Uterus (tissue), 4 donors: ENCODE measurements at regions of chr10 and their contacts with region 1.

Region 1: GRCh38 chr10:5442065-5442989 is 30.0 kb downstream of the NET1 start:
- DNase-seq: peak in 1 of 2 donors; percentile 51
- H3K4me3 ChIP-seq: no peak overlapping the region
- H3K27ac ChIP-seq: no peak overlapping the region
- H3K4me1 ChIP-seq: no peaks in the 10 kb centered on the region
- H3K27me3 ChIP-seq: no peaks in the 10 kb centered on the region
- CTCF ChIP-seq: peak; percentile 70 to 86 (median 81)
- POLR2A ChIP-seq: no peak

Region 2: DNA sequence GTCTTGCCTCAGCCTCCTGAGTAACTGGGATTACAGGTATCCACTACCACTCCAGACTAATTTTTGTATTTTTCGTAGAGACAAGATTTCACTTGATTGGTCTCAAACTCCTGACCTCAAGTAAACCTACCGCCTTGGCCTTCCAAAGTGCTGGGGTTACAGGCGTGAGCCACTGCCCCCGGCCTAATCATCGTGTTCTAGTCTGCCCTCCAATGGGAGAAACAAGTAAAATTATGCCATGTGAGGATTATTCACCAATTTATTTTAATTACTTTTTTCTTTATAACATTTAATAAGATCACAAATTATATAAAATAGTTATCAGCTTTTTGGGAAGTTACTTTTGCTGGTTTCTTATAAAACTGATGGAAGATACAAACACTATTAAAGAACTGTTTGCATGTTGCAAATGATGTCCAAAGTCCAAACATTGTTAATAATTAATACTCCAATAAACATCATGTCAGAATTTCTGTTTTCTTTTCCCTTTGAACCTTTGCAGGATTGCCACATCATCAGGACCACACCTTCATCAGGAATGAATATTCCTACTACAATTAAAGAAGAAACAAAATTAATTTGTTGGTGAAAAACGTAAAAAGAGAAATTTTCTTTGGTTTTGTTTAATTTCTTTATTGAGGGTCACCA is 246.5 kb before region 1 on chr10:
- intact Hi-C with region 1: no loop called
- DNase-seq: no peak
- H3K4me3 ChIP-seq: no peak overlapping the region
- H3K27ac ChIP-seq: no peak overlapping the region
- H3K4me1 ChIP-seq: no peaks in the 10 kb centered on the region
- H3K27me3 ChIP-seq: no peaks in the 10 kb centered on the region
- CTCF ChIP-seq: no peak
- POLR2A ChIP-seq: no peak

Region 3: DNA sequence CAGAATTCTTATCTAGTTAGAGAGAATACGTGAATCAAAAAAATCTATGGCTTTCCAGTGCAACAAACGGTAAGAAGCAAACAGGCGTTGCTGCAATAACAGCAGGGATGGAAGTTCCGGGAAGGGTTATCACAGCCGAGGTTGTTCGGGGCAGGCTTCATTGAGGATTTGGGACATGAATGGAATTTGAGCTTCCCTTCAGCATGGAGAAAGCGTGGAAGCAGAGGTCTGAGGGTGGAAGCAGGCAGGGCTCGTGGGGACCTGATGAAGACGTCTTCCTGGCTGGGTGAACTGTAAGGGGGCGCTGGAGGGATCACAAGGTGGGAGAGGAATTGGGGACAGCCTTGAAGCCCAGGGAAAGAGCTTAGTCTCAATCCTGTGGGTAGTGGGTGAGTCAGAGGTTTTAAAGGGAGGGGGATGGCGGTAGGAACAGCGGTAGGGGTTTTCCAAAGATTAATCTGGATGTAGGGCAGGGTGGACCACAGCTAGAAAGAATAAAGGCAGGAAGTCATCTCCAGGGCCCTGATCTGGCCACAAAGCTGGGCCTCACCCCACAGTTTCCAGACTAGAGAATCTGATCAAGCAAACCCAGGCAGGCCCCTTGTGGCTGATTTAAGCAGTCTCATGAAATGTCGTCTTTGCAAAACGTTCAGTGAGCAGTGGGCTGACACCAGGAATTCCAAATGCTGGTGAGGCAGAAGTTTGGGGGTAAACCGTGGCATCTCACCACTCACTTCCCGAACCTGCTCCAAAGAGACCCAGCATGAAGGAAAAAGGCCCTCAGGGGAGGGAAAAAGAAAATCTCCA is 147.6 kb after region 1 on chr10:
- intact Hi-C with region 1: no loop called
- DNase-seq: no peak
- H3K4me3 ChIP-seq: no peak overlapping the region
- H3K27ac ChIP-seq: peak overlapping the region; percentile 3 to 14
- H3K4me1 ChIP-seq: no peaks in the 10 kb centered on the region
- H3K27me3 ChIP-seq: no peaks in the 10 kb centered on the region
- CTCF ChIP-seq: no peak
- POLR2A ChIP-seq: no peak

Region 4: DNA sequence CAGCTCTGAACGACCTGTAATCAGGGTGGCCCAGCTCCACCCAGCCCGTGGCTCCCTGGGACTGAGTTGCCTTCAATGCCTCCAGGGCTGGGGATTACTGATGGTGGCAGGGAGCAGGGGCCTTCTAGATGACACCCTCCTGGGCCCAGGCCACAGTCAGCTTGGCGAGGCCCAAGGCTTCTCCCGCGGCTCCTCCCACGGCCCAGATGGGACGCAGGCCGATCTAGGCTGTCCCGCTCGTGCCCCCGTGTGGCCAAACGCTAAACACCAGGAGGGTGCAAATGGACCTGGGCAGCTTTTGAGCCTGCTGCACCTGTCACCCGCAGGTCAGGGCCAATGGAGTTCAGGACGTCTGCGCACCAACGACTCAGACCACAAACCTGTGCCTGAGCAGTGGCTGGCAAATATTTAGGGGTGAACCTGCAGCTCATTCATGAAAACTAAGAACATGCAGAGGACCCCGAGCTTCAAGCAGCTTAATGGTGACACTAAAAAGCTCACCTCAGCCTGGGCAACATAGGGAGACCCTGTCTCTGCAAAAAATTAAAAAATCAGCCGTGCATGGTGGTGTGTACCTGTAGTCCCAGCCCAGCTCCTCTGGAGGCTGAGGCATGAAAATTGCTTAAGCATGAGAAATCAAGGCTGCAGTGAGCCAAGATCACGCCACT is 180.9 kb after region 1 on chr10:
- intact Hi-C with region 1: loop called (anchors 5 kb)
- DNase-seq: peak; percentile 85 to 87
- H3K4me3 ChIP-seq: no peak overlapping the region
- H3K27ac ChIP-seq: peak overlapping the region; percentile 60 to 71
- H3K4me1 ChIP-seq: peaks cover 0 to 9% of the 10 kb centered on the region in 2 donors
- H3K27me3 ChIP-seq: no peaks in the 10 kb centered on the region
- CTCF ChIP-seq: peak; percentile 90 to 94 (median 91)
- POLR2A ChIP-seq: no peak

Region 5: DNA sequence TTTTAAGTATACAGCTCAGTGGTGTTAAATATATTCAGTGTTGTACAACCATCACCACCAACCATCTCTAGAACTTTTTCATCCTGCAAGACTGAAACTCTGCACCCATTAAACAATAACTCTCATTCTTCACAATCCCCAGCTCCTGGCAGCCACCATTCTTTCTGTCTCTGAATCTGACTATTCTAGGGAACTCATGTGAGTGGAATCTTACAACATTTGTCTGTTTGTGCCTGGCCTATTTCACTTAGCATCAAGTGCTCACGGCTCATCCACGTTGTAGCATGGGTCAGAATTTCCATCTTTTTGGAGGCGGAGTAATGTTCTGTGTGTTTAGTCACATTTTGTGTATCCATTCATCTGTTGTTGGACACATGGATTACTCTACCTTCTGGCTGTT is 719.6 kb after region 1 on chr10:
- intact Hi-C with region 1: no loop called
- DNase-seq: no peak
- H3K4me3 ChIP-seq: no peak overlapping the region
- H3K27ac ChIP-seq: peak overlapping the region in 1 of 2 donors; percentile 90
- H3K4me1 ChIP-seq: peaks cover 0 to 7% of the 10 kb centered on the region in 2 donors
- H3K27me3 ChIP-seq: no peaks in the 10 kb centered on the region
- CTCF ChIP-seq: no peak
- POLR2A ChIP-seq: no peak